Activated CD8-positive, alpha-beta T cell treated with anti-CD3 and anti-CD28 coated beads for 36 hours (primary cell): ENCODE measurements at regions of chr10 and their contacts with region 1.

Region 1: GRCh38 chr10:87861953-87862678 is 1.2 kb downstream of the KLLN start:
- DNase-seq: peak; percentile 95
- ATAC-seq: peak; percentile 63
- H3K4me3 Mint-ChIP-seq: peak overlapping the region; percentile 87
- H3K27ac Mint-ChIP-seq: peak overlapping the region; percentile 95
- H3K4me1 Mint-ChIP-seq: peaks cover 22% of the 10 kb centered on the region
- H3K27me3 Mint-ChIP-seq: no peaks in the 10 kb centered on the region
- CTCF ChIP-seq: no peak

Region 2: GRCh38 chr10:87734987-87735827 is 126.9 kb before region 1 on chr10:
- CTCF ChIA-PET with region 1: no interaction called
- POLR2A ChIA-PET with region 1: no interaction called
- intact Hi-C with region 1: no loop called
- DNase-seq: no peak
- ATAC-seq: peak; percentile 88
- H3K4me3 Mint-ChIP-seq: no peak overlapping the region
- H3K27ac Mint-ChIP-seq: no peak overlapping the region
- H3K4me1 Mint-ChIP-seq: no peaks in the 10 kb centered on the region
- H3K27me3 Mint-ChIP-seq: peaks cover 13% of the 10 kb centered on the region
- CTCF ChIP-seq: peak; percentile 69

Region 3: DNA sequence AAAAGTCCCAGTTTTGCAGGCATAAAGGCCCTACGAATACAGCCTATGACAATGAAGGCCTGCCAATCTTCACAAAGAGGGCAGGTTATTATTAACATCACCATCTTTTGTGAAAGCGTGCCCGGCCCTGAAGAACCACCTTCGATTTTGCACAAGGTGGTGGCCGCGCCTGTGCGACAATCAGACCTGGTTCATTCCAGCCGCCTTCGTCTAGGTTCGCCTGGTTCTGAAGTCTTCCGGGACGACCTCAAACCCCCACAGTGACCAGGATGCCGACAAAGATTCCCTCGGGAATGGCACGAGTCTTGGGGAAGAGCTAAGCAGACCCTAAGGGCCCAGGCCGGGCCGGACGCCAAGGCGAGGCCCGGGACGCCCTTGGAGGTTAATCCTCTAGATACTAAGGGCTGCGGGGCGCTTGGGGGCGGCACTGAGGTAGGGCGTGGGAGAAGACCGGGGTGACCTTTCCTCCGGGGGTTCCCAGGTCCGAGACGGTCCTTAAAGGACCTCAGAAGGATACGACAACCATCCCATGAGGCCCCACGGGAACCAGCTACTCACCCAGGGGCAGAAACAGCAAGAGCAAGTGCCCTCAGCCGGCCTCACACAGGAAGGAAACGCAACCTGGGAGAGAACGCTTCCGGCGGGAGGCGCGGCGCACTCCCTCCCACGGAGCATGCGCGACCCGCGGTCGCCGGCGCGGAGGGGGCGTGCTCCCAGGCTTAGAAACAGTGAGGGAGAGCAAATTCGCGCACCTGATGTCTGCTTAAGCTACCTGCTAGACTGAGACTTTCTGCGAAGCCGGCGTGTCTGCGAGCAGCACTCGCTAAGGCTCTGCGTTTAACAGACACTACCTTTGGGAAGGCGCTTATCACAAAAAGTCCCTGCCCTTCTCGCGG is 44.3 kb before region 1 on chr10 and contains the start of gene ATAD1:
- CTCF ChIA-PET with region 1: interaction called, 11 read pairs
- POLR2A ChIA-PET with region 1: interaction called, 28 read pairs
- intact Hi-C with region 1: loop called (anchors 5 kb)
- DNase-seq: peak; percentile 91
- ATAC-seq: peak; percentile 87
- H3K4me3 Mint-ChIP-seq: peak within 1 kb of the TSS; percentile 89
- H3K27ac Mint-ChIP-seq: peak within 1 kb of the TSS; percentile 97
- H3K4me1 Mint-ChIP-seq: peaks cover 33% of the 10 kb centered on the region
- H3K27me3 Mint-ChIP-seq: no peaks in the 10 kb centered on the region
- CTCF ChIP-seq: no peak
- total RNA-seq, gene ATAD1: 43.8 to 49.3 TPM

Region 4: GRCh38 chr10:87991946-87992345 is 129.8 kb after region 1 on chr10:
- CTCF ChIA-PET with region 1: no interaction called
- POLR2A ChIA-PET with region 1: no interaction called
- intact Hi-C with region 1: no loop called
- DNase-seq: no peak
- ATAC-seq: no peak
- H3K4me3 Mint-ChIP-seq: no peak overlapping the region
- H3K27ac Mint-ChIP-seq: no peak overlapping the region
- H3K4me1 Mint-ChIP-seq: peaks cover 9% of the 10 kb centered on the region
- H3K27me3 Mint-ChIP-seq: no peaks in the 10 kb centered on the region
- CTCF ChIP-seq: no peak

Region 5: GRCh38 chr10:88059190-88059589 is 197.1 kb after region 1 on chr10:
- CTCF ChIA-PET with region 1: no interaction called
- POLR2A ChIA-PET with region 1: no interaction called
- intact Hi-C with region 1: no loop called
- DNase-seq: no peak
- ATAC-seq: no peak
- H3K4me3 Mint-ChIP-seq: no peak overlapping the region
- H3K27ac Mint-ChIP-seq: no peak overlapping the region
- H3K4me1 Mint-ChIP-seq: peaks cover 29% of the 10 kb centered on the region
- H3K27me3 Mint-ChIP-seq: no peaks in the 10 kb centered on the region
- CTCF ChIP-seq: no peak

Region 6: DNA sequence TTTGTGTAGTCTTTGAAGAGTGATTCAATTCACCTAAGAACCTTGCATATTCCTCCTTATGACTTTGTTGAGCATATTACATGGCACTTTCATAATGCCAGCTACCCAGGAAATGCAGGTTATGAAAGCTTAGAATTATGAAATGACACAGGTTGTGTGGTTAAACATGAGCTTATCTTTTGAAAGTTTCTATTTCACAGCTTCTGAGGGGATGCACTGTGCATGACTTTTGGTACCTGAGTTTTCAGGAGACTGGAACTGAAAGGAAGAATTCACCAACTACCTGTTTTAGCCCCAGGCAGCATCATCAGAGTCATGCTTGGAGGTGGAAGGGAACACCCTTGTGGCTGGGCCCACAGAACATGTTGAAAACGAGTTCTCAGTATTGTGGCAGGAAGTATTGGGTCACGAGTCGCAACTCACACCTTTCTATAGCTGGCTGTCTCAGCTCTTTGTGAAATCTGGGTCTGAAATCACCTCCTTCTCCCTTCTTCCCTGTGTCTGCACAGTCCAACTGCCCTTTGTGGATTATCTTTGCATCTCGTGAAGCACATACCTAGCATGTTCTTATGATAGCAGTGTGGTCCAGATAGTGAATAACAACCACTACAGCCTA is 229.5 kb after region 1 on chr10:
- CTCF ChIA-PET with region 1: interaction called, 10 read pairs
- POLR2A ChIA-PET with region 1: interaction called, 18 read pairs
- intact Hi-C with region 1: loop called (anchors 1 kb)
- DNase-seq: peak; percentile 90
- ATAC-seq: peak; percentile 97
- H3K4me3 Mint-ChIP-seq: no peak overlapping the region
- H3K27ac Mint-ChIP-seq: peak overlapping the region; percentile 36
- H3K4me1 Mint-ChIP-seq: peaks cover 36% of the 10 kb centered on the region
- H3K27me3 Mint-ChIP-seq: peaks cover 14% of the 10 kb centered on the region
- CTCF ChIP-seq: no peak

Region 7: GRCh38 chr10:88114368-88114767 is 252.3 kb after region 1 on chr10:
- CTCF ChIA-PET with region 1: interaction called, 7 read pairs
- POLR2A ChIA-PET with region 1: interaction called, 11 read pairs
- intact Hi-C with region 1: no loop called
- DNase-seq: peak; percentile 25
- ATAC-seq: no peak
- H3K4me3 Mint-ChIP-seq: no peak overlapping the region
- H3K27ac Mint-ChIP-seq: no peak overlapping the region
- H3K4me1 Mint-ChIP-seq: peaks cover 16% of the 10 kb centered on the region
- H3K27me3 Mint-ChIP-seq: peaks cover 4% of the 10 kb centered on the region
- CTCF ChIP-seq: peak; percentile 68

Region 8: DNA sequence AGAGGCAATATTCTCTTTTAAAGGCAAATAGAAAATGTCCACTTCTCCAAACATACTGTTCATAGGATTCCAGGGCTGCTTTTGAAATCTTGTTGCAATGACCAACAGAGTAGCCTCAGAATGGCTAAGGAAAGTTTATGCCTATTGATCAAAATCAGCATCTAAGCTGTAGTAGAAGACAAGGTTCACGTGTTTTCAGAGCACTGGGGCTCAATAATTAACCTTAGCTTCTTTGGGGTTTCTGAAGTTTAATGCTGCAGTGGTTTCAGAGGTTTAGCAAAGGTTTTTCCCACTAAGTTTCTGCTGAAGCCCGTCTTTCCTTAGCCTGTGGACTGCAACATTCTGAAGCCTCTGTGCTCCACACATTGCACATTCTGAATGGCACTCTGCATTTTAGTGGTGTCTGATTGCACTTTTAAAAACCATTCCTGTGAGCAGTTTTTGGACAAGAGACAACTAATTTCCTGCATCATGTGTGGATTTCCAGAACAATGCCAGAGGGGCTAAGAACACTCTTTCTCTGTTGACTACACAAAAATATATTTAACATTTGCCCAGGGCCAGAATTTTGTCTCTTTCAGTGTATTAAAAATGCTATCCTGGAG is 343.8 kb after region 1 on chr10:
- CTCF ChIA-PET with region 1: no interaction called
- POLR2A ChIA-PET with region 1: no interaction called
- intact Hi-C with region 1: no loop called
- DNase-seq: no peak
- ATAC-seq: no peak
- H3K4me3 Mint-ChIP-seq: no peak overlapping the region
- H3K27ac Mint-ChIP-seq: no peak overlapping the region
- H3K4me1 Mint-ChIP-seq: no peaks in the 10 kb centered on the region
- H3K27me3 Mint-ChIP-seq: no peaks in the 10 kb centered on the region
- CTCF ChIP-seq: no peak

Region 9: DNA sequence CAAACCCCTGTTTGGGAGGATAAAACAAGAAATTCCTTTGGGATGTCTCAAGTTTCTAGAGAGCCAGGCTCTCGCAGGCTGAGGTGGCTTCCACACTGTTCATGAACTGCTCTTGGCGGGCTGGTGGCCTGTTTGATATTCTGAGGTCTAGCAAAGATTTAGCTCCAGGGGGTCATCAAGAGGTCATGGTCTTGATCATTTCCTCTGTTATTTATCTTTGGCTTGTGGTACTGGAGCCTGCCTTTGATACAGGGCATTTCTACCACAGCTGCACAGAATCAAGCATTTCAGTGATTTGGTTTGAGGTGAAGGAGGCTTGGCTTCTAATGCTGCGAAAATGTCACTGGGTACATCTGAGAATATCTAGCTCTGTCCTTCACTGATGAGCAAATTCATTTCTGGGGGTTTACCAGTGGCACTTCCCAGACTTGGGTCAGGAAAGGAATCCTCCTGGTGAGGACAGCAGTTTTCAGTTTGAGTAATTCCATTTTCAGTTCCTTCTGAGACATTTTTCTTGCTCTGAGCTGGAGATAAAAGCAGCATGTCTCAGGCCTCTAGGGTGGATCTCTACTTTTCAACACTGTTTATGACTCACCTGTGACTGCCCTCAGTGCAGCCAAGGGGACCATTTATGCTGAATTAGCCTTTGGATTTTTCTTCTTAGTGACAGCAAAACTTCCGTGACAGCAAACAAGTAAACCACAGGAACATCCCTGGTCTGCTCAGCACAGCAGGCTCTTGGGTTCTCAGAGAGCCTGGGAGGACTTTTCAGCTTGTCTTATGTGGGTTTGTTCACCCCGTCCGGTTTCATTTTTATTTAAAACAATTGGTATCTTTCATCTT is 409.0 kb after region 1 on chr10:
- CTCF ChIA-PET with region 1: interaction called, 6 read pairs
- POLR2A ChIA-PET with region 1: interaction called, 7 read pairs
- intact Hi-C with region 1: loop called (anchors 5 kb)
- DNase-seq: peak; percentile 79
- ATAC-seq: peak; percentile 91
- H3K4me3 Mint-ChIP-seq: peak overlapping the region; percentile 53
- H3K27ac Mint-ChIP-seq: peak overlapping the region; percentile 90
- H3K4me1 Mint-ChIP-seq: peaks cover 46% of the 10 kb centered on the region
- H3K27me3 Mint-ChIP-seq: peaks cover 5% of the 10 kb centered on the region
- CTCF ChIP-seq: no peak

Region 10: DNA sequence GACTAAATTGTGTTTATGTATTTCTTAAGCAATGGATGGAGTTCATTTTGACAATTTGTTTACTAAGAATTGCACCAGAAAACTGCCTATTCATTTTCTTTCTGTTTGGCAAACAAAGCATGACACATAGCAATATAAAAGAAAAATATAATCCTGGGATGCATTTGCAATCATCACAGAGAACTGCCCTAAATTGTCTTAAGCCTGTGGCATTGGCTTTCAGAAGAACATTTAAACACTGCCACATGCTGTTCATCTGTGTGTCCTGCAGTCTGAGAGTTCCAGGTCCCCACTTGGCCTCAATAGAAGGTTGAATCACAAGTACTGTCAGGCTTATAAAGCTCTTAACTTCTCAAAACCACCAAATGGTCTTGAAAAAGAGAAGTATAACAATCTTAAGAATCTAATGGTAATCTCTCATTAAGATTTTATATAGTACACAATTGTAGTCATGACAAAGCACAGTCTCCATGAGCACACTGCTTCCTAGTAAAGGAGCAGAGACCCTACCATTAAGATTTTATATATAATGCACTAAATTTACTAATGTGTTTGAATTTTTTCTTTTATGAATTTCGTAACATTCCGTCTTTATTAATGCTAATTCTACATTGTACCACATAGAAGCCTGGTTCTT is 691.1 kb after region 1 on chr10:
- CTCF ChIA-PET with region 1: interaction called, 10 read pairs
- POLR2A ChIA-PET with region 1: interaction called, 3 read pairs
- intact Hi-C with region 1: no loop called
- DNase-seq: peak; percentile 58
- ATAC-seq: peak; percentile 93
- H3K4me3 Mint-ChIP-seq: no peak overlapping the region
- H3K27ac Mint-ChIP-seq: no peak overlapping the region
- H3K4me1 Mint-ChIP-seq: peaks cover 4% of the 10 kb centered on the region
- H3K27me3 Mint-ChIP-seq: no peaks in the 10 kb centered on the region
- CTCF ChIP-seq: peak; percentile 54